ENCODE measurements at regions of chr12 and their contacts with region 1.

Region 1: GRCh38 chr12:49707128-49707811 is at the start of gene FMNL3:
- DNase-seq: peak; percentile 95
- ATAC-seq: peak; percentile 94
- H3K4me3 ChIP-seq: peak within 1 kb of the TSS; percentile 97
- H3K27ac ChIP-seq: peak within 1 kb of the TSS; percentile 92
- H3K4me1 ChIP-seq: peaks cover 22% of the 10 kb centered on the region
- H3K27me3 ChIP-seq: peaks cover 14% of the 10 kb centered on the region
- CTCF ChIP-seq: peak; percentile 99
- POLR2A ChIP-seq: peak; percentile 66
- RAD21 ChIP-seq: peak; percentile 99
- total RNA-seq, gene FMNL3: 34.4 and 36.4 TPM in 2 replicates

Region 2: DNA sequence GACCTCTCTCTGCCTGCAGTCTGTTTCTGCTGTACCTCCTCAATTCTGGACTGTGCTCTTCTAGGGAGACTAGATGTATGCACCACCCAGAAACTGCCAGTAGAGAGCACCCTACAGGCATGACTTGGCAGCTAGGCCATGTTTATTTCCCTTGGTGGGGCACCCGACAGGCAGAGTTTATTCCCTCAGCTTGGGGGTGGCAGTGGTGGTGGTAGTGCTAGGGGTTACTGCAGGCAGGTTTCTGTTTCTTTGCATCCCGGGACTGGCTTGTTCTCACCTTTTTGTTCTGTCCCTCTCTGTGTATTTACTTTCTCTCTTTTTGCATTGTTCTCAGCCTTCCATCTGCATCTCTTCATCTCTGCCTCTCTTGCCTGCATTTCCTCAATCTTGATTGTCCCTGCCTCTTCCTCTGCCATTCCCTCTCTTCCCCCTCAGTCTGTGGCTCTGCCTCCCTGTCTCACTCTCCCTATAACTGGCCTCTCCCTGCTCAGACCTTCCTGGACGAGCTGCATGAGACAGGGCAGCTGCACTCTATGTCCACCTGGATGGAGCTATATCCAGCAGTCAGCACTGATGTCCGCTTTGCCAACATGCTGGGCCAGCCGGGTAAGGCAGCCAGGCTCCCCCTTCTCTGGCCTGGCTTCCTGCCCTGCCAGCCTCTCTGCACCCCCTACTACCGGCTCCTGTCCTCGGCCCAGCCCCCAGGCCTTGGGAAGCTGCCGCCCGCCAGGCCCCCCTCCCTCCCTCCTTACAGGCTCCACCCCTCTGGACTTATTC is 70.1 kb before region 1 on chr12:
- CTCF ChIA-PET with region 1: interaction called, 5 read pairs
- POLR2A ChIA-PET with region 1: no interaction called
- dilution Hi-C with region 1: no loop called
- in situ Hi-C with region 1: loop called (anchors 5 kb)
- intact Hi-C with region 1: loop called (anchors 2 kb)
- DNase-seq: peak; percentile 68
- ATAC-seq: peak; percentile 95
- H3K4me3 ChIP-seq: no peak overlapping the region
- H3K27ac ChIP-seq: peak overlapping the region; percentile 18; the same call in 1 of the 2 replicates
- H3K4me1 ChIP-seq: peaks cover 5% of the 10 kb centered on the region; the same call in 1 of the 2 replicates
- H3K27me3 ChIP-seq: no peaks in the 10 kb centered on the region
- CTCF ChIP-seq: peak; percentile 79
- POLR2A ChIP-seq: no peak
- RAD21 ChIP-seq: peak; percentile 79

Region 3: DNA sequence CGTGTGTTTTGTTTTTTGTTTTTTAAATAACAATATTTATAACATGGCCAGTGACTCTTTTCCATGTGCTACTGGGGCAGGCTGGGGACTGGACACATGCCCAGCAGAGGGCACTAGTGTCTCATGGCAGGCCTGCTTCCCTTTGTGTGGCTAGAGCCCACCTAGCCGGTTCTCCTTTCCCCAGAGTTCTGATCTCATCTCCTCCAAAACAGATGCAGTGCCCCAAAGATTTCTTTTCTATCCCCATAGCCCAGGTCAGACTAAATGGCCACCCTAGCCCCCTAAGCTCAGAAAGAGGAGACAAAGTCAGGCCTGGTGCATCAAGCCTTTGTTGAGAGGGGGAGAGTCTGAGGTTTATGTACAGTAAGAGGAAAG is 62.7 kb before region 1 on chr12:
- CTCF ChIA-PET with region 1: interaction called, 5 read pairs
- POLR2A ChIA-PET with region 1: no interaction called
- dilution Hi-C with region 1: no loop called
- in situ Hi-C with region 1: loop called (anchors 5 kb)
- intact Hi-C with region 1: loop called (anchors 1 kb)
- DNase-seq: peak; percentile 75
- ATAC-seq: peak; percentile 96
- H3K4me3 ChIP-seq: no peak overlapping the region
- H3K27ac ChIP-seq: no peak overlapping the region
- H3K4me1 ChIP-seq: no peaks in the 10 kb centered on the region
- H3K27me3 ChIP-seq: no peaks in the 10 kb centered on the region
- CTCF ChIP-seq: peak; percentile 99
- POLR2A ChIP-seq: peak; percentile 25; the same call in 1 of the 2 replicates
- RAD21 ChIP-seq: peak; percentile 100

Region 4: GRCh38 chr12:49673446-49674317 is 33.6 kb before region 1 on chr12:
- CTCF ChIA-PET with region 1: interaction called, 13 read pairs
- POLR2A ChIA-PET with region 1: no interaction called
- dilution Hi-C with region 1: no loop called
- in situ Hi-C with region 1: no loop called
- intact Hi-C with region 1: loop called (anchors 1 kb)
- DNase-seq: peak; percentile 94
- ATAC-seq: peak; percentile 98
- H3K4me3 ChIP-seq: no peak overlapping the region
- H3K27ac ChIP-seq: peak overlapping the region; percentile 85
- H3K4me1 ChIP-seq: peaks cover 37% of the 10 kb centered on the region
- H3K27me3 ChIP-seq: no peaks in the 10 kb centered on the region
- CTCF ChIP-seq: peak; percentile 32; the same call in 1 of the 2 replicates
- POLR2A ChIP-seq: peak; percentile 76; the same call in 1 of the 2 replicates
- RAD21 ChIP-seq: peak; percentile 42

Region 5: GRCh38 chr12:49693994-49694393 is 13.3 kb before region 1 on chr12:
- CTCF ChIA-PET with region 1: no interaction called
- POLR2A ChIA-PET with region 1: no interaction called
- dilution Hi-C with region 1: no loop called
- in situ Hi-C with region 1: no loop called
- intact Hi-C with region 1: no loop called
- DNase-seq: no peak
- ATAC-seq: no peak
- H3K4me3 ChIP-seq: no peak overlapping the region
- H3K27ac ChIP-seq: no peak overlapping the region
- H3K4me1 ChIP-seq: peaks cover 6% of the 10 kb centered on the region
- H3K27me3 ChIP-seq: no peaks in the 10 kb centered on the region
- CTCF ChIP-seq: no peak
- POLR2A ChIP-seq: no peak
- RAD21 ChIP-seq: no peak

Region 6: GRCh38 chr12:49740930-49741881 is 33.9 kb after region 1 on chr12 and contains the start of gene TMBIM6:
- CTCF ChIA-PET with region 1: interaction called, 3 read pairs
- POLR2A ChIA-PET with region 1: interaction called, 4 read pairs
- dilution Hi-C with region 1: no loop called
- in situ Hi-C with region 1: no loop called
- intact Hi-C with region 1: loop called (anchors 1 kb)
- DNase-seq: peak; percentile 100
- ATAC-seq: peak; percentile 98
- H3K4me3 ChIP-seq: peak within 1 kb of the TSS; percentile 69
- H3K27ac ChIP-seq: peak within 1 kb of the TSS; percentile 90
- H3K4me1 ChIP-seq: peaks cover 5% of the 10 kb centered on the region
- H3K27me3 ChIP-seq: no peaks in the 10 kb centered on the region
- CTCF ChIP-seq: peak; percentile 95
- POLR2A ChIP-seq: peak; percentile 99
- RAD21 ChIP-seq: peak; percentile 72
- total RNA-seq, gene TMBIM6: 255 and 369 TPM in 2 replicates